ENCODE measurements at regions of chr7 and their contacts with region 1.

Region 1: DNA sequence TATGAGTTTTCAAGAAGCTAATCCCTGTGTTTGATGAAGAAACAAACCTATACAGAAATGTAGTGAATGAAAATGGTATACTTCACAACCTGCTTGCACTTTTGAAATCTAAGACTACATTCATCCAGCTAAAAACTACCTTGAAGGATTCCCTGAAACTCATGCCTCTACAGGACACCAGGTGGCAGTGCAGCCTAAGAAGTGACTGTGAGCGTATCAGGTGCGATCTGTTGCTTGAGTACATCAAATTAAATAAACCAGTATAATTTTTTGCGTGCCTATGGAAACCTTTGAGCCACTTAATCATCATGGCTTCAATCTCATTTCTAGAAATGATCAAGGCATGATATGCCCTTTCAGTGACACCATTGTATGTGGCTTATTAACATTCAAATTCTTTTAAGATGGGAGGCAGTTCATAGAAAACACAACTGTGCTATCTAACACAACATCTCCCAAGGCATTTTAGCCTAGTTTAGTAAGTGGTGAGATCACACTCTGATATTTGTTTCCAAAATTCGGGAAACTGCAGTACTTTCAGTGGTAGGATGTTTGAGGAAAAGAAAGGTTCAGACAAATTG is 57.4 kb downstream of the PPP1R17 start:
- DNase-seq: peak; percentile 61 to 84
- ATAC-seq: no peak
- H3K4me3 ChIP-seq: no peak overlapping the region
- H3K27ac ChIP-seq: no peak overlapping the region
- H3K4me1 ChIP-seq: no peaks in the 10 kb centered on the region
- H3K27me3 ChIP-seq: peaks cover 0 to under 1% of the 10 kb centered on the region in 2 donors

Region 2: DNA sequence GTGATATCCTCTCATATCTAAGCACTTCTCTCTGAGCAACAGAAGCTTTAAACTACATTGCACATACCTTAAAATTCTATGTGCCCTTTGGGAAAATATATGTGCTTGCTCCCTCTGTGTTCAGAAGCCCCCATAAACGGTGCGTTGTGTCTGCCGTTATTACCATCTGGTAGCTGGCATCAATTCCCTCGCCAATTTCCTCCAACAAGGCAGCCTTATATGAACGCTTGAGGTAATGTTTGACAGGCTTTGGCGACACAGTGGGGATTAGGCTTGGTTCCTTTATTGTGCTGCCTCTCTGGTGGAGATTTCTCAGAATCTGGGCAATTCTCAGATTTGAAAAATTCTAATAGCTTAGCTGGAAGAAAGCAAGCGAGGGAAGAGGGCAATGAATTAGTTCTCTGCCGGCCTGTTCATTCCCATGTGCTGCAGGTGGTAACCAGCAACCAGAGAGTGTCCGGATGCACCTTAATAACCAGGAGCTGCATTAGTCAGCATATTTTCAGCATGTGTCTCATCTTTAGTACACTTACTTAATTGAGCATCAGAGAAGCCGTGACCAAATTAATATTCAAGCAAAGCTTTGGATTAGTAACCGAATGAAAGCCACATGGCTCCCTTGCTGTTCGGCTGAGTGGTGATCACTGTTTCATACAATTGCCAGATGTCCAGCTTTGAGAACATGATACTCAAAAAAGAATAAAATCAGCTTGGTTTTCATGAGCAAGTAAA is 64.6 kb before region 1 on chr7:
- intact Hi-C with region 1: no loop called
- DNase-seq: no peak
- ATAC-seq: no peak
- H3K4me3 ChIP-seq: no peak overlapping the region
- H3K27ac ChIP-seq: no peak overlapping the region
- H3K4me1 ChIP-seq: no peaks in the 10 kb centered on the region
- H3K27me3 ChIP-seq: peaks cover 0 to 2% of the 10 kb centered on the region in 2 donors

Region 3: DNA sequence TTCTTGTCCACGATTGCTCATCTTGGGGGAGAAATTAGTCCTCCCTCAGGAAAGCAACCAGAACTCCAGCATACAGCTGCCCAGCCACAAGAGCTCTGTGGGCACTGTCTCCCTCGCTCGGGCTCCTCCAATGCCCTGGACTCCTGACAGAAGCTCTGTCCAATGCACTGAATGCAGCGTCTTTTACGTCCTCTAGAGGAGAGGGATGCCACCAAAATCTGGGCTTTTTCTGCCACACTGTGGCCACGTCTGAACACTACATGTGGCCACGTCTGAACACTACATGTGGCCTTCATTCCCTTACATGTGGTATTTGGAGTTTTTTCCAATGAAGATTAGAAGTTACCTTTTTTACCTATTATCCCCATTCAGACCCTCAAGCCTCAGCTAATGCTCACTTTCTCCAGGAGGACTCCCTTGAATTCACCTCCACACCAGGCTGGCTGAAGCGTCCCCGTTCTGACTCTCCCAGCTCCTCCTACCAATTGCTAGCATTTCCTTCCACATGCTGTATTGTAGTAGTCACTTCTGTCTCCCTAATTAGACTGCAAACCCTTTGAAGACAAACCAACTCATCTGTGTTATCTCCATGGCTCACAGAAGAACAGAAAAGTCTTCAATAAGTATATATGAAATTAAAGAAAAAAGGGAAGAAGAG is 460.1 kb after region 1 on chr7:
- intact Hi-C with region 1: loop called (anchors 2 kb)
- DNase-seq: peak; percentile 71 to 81
- ATAC-seq: peak; percentile 85
- H3K4me3 ChIP-seq: peak overlapping the region in 1 of 2 donors; percentile 57
- H3K27ac ChIP-seq: no peak overlapping the region
- H3K4me1 ChIP-seq: no peaks in the 10 kb centered on the region
- H3K27me3 ChIP-seq: no peaks in the 10 kb centered on the region